ENCODE measurements at regions of chr7 and their contacts with region 1.

Region 1: GRCh38 chr7:157507987-157508386 is 171.2 kb downstream of the DNAJB6 start:
- DNase-seq: no peak
- H3K4me3 Mint-ChIP-seq: no peak overlapping the region
- H3K27ac Mint-ChIP-seq: no peak overlapping the region
- H3K4me1 Mint-ChIP-seq: peaks cover 17% of the 10 kb centered on the region
- H3K27me3 Mint-ChIP-seq: peaks cover 45% of the 10 kb centered on the region

Region 2: GRCh38 chr7:157474689-157475088 is 33.3 kb before region 1 on chr7:
- intact Hi-C with region 1: loop called (anchors 5 kb)
- DNase-seq: no peak
- H3K4me3 Mint-ChIP-seq: no peak overlapping the region
- H3K27ac Mint-ChIP-seq: no peak overlapping the region
- H3K4me1 Mint-ChIP-seq: peaks cover 52% of the 10 kb centered on the region
- H3K27me3 Mint-ChIP-seq: no peaks in the 10 kb centered on the region

Measured in activated T-helper 1 cell treated with anti-CD3 and anti-CD28 coated beads, Interleukin-12 subunit alpha, Interleukin-12 subunit beta, Interleukin-2, Interleukin-4 antibody, amounts not matched to agents 30 ng/mL and 10 ng/mL and 1 ng/mL, durations not matched to agents 14 hours and 24 hours and 36 hours (primary cell).